ENCODE measurements at regions of chr15 and their contacts with region 1.

Region 1: DNA sequence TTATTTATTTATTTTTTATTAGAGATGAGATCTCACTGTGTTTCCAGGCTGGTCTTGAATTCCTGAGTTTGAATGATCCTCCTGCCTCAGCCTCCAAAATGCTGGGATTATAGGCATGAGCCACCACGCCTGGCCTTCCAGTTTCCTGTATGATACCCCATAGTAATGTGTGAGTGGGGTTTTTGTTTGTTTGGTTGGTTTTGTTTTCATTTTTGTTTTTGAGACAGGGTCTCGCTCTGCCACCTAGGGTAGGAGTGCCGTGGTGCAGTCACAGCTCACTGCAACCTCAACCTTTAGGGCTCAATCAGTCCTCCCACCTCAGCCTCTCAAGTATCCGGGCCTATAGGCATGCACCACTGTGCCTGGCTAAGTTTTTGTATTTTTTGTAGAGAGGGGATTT is 30.9 kb downstream of the GOLM2 start:
- DNase-seq: no peak
- ATAC-seq: peak; percentile 77
- H3K4me3 Mint-ChIP-seq: no peak overlapping the region
- H3K27ac Mint-ChIP-seq: peak overlapping the region; percentile 47
- H3K4me1 Mint-ChIP-seq: peaks cover 30% of the 10 kb centered on the region
- H3K27me3 Mint-ChIP-seq: no peaks in the 10 kb centered on the region
- CTCF ChIP-seq: no peak

Region 2: DNA sequence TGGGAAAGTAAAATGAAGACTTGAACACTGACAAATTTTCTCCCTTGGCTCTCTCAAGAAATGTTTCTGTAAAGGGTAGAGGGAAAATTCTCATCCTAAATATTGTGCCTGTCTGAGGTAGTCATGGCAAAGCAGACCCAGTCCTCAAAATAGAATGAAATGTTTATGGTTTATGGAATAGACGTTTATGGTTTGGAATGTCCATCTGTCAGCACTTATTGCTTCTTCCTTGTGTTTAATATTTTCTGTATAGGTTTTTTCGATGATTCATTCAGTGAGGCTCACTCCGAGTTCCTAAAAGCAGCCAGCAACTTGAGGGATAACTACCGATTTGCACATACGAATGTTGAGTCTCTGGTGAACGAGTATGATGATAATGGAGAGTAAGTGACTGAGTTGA is 556.6 kb before region 1 on chr15:
- CTCF ChIA-PET with region 1: no interaction called
- POLR2A ChIA-PET with region 1: no interaction called
- intact Hi-C with region 1: no loop called
- DNase-seq: no peak
- ATAC-seq: no peak
- H3K4me3 Mint-ChIP-seq: no peak overlapping the region
- H3K27ac Mint-ChIP-seq: no peak overlapping the region
- H3K4me1 Mint-ChIP-seq: no peaks in the 10 kb centered on the region
- H3K27me3 Mint-ChIP-seq: no peaks in the 10 kb centered on the region
- CTCF ChIP-seq: no peak

Region 3: GRCh38 chr15:43903864-43904290 is 415.5 kb before region 1 on chr15:
- CTCF ChIA-PET with region 1: no interaction called
- POLR2A ChIA-PET with region 1: no interaction called
- intact Hi-C with region 1: loop called (anchors 2 kb)
- DNase-seq: peak; percentile 24
- ATAC-seq: peak; percentile 69
- H3K4me3 Mint-ChIP-seq: no peak overlapping the region
- H3K27ac Mint-ChIP-seq: no peak overlapping the region
- H3K4me1 Mint-ChIP-seq: peaks cover 6% of the 10 kb centered on the region
- H3K27me3 Mint-ChIP-seq: no peaks in the 10 kb centered on the region
- CTCF ChIP-seq: no peak

Region 4: GRCh38 chr15:44219073-44219472 is 100.3 kb before region 1 on chr15:
- CTCF ChIA-PET with region 1: interaction called, 8 read pairs
- POLR2A ChIA-PET with region 1: no interaction called
- intact Hi-C with region 1: loop called (anchors 1 kb)
- DNase-seq: no peak
- ATAC-seq: no peak
- H3K4me3 Mint-ChIP-seq: no peak overlapping the region
- H3K27ac Mint-ChIP-seq: no peak overlapping the region
- H3K4me1 Mint-ChIP-seq: peaks cover 2% of the 10 kb centered on the region
- H3K27me3 Mint-ChIP-seq: peaks cover 15% of the 10 kb centered on the region
- CTCF ChIP-seq: no peak

Region 5: DNA sequence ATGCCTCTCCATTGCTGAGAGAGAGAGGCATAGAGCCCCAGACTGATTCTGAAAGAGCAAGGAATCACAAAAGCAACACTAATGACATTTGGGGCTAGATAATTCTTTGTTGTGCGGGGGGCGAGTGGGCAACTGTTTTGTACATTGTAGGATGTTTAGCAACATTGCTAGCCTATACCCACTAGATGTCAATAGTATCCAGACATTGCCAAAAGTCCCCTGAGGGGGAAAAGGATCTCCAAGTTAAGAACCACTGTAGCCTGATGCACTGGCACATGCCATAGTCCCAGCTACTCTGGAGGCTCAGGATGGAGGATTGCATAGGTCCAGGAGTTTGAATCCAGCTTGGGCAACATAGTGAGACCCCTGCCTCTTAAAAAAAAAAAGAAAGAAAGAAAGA is 53.6 kb before region 1 on chr15:
- CTCF ChIA-PET with region 1: no interaction called
- POLR2A ChIA-PET with region 1: no interaction called
- intact Hi-C with region 1: loop called (anchors 10 kb)
- DNase-seq: no peak
- ATAC-seq: no peak
- H3K4me3 Mint-ChIP-seq: no peak overlapping the region
- H3K27ac Mint-ChIP-seq: no peak overlapping the region
- H3K4me1 Mint-ChIP-seq: no peaks in the 10 kb centered on the region
- H3K27me3 Mint-ChIP-seq: peaks cover 3% of the 10 kb centered on the region
- CTCF ChIP-seq: no peak

Region 6: GRCh38 chr15:44286814-44287452 is 32.5 kb before region 1 on chr15:
- CTCF ChIA-PET with region 1: interaction called, 4 read pairs
- POLR2A ChIA-PET with region 1: interaction called, 4 read pairs
- intact Hi-C with region 1: loop called (anchors 5 kb)
- DNase-seq: no peak
- ATAC-seq: no peak
- H3K4me3 Mint-ChIP-seq: peak overlapping the region; percentile 90
- H3K27ac Mint-ChIP-seq: peak overlapping the region; percentile 99
- H3K4me1 Mint-ChIP-seq: peaks cover 42% of the 10 kb centered on the region
- H3K27me3 Mint-ChIP-seq: peaks cover 3% of the 10 kb centered on the region
- CTCF ChIP-seq: no peak

Region 7: DNA sequence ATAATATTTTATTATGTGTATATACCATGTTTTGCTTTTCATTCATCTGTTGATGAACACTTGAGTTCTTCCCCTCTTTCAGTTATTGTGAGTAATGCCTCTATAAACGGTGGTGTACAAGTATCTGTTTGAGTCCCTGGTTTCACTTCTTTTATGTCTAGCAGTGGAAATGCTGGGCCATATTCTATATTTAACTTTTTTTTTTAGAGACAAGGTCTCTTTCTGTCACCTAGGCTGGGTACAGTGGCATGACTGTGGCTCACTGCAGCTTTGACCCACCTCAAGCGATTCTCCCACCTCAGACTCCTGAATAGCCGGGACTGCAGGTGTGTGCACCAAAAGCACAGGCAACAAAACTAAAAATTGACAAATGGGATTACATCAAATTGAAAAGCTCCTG is 11.0 kb before region 1 on chr15:
- CTCF ChIA-PET with region 1: interaction called, 7 read pairs
- POLR2A ChIA-PET with region 1: no interaction called
- intact Hi-C with region 1: loop called (anchors 1 kb)
- DNase-seq: no peak
- ATAC-seq: peak; percentile 85
- H3K4me3 Mint-ChIP-seq: peak overlapping the region; percentile 69
- H3K27ac Mint-ChIP-seq: peak overlapping the region; percentile 88
- H3K4me1 Mint-ChIP-seq: peaks cover 68% of the 10 kb centered on the region
- H3K27me3 Mint-ChIP-seq: no peaks in the 10 kb centered on the region
- CTCF ChIP-seq: no peak